ENCODE measurements at regions of chr19 and their contacts with region 1.

Region 1: GRCh38 chr19:10870955-10871603 is at the start of gene CARM1:
- DNase-seq: peak; percentile 99 to 100
- ATAC-seq: peak; percentile 98
- H3K4me3 ChIP-seq: peak within 1 kb of the TSS; percentile 69 to 97
- H3K27ac ChIP-seq: peak within 1 kb of the TSS in 1 of 2 donors; percentile 67
- H3K4me1 ChIP-seq: no peaks in the 10 kb centered on the region
- H3K27me3 ChIP-seq: no peaks in the 10 kb centered on the region
- total RNA-seq, gene CARM1: 27.9 to 41.4 TPM

Region 2: GRCh38 chr19:10835754-10836477 is 35.2 kb before region 1 on chr19 and contains the start of gene TMED1:
- intact Hi-C with region 1: loop called in 1 of 2 experiments (anchors 2 kb)
- DNase-seq: peak; percentile 100
- ATAC-seq: peak; percentile 95
- H3K4me3 ChIP-seq: peak within 1 kb of the TSS; percentile 35 to 43
- H3K27ac ChIP-seq: peak within 1 kb of the TSS; percentile 45 to 66
- H3K4me1 ChIP-seq: no peaks in the 10 kb centered on the region
- H3K27me3 ChIP-seq: no peaks in the 10 kb centered on the region
- total RNA-seq, gene TMED1: 14.4 to 17.9 TPM

Region 3: DNA sequence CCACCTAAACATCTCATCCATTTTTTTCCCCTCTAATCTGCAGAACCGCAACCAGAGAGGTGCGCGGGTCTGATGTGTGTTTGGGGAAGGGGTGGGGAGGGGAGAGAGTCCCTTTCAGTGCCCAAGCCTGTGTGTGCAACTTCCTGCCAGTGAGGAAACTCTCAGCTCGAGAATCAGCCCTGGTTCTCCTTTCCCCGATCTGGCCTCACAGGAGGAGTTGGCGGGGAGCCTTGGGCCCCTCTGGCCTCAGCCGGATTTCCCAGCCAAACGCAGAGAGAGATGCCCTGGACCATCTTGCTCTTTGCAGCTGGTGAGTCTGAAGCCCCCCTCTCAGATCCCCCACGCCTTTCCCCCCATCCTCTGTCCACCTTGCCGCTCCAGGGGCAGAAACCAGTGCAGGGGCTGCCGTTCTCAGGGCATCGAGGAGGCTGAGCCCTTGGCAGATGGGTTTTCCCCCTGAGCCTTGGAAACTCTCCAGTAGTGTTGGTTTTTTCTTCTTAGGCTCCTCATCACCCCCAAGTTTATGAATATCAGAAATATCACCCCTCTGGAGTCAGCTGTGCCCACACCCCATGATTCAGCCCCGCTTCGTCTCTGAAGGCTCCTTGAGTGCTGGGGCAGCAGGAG is 22.7 kb before region 1 on chr19 and contains the start of gene C19orf38:
- intact Hi-C with region 1: no loop called
- DNase-seq: no peak
- ATAC-seq: no peak
- H3K4me3 ChIP-seq: no peak within 1 kb of the TSS
- H3K27ac ChIP-seq: no peak within 1 kb of the TSS
- H3K4me1 ChIP-seq: no peaks in the 10 kb centered on the region
- H3K27me3 ChIP-seq: no peaks in the 10 kb centered on the region
- total RNA-seq, gene C19orf38: 1.5 to 2.0 TPM

Region 4: GRCh38 chr19:10928525-10929401 is 57.7 kb after region 1 on chr19 and contains the starts of genes TIMM29 and YIPF2:
- intact Hi-C with region 1: loop called (anchors 2 to 10 kb)
- DNase-seq: peak; percentile 98
- ATAC-seq: peak; percentile 95
- H3K4me3 ChIP-seq: peak within 1 kb of the TSS; percentile 67 to 84
- H3K27ac ChIP-seq: peak within 1 kb of the TSS in 1 of 2 donors; percentile 55
- H3K4me1 ChIP-seq: no peaks in the 10 kb centered on the region
- H3K27me3 ChIP-seq: no peaks in the 10 kb centered on the region
- total RNA-seq, gene TIMM29: 13.7 to 15.7 TPM
- total RNA-seq, gene YIPF2: 36.5 to 41.8 TPM

Measured in aorta (tissue), 5 donors.